MCF 10A (cell line): ENCODE measurements at regions of chr2 and their contacts with region 1.

Region 1: GRCh38 chr2:201071479-201072200 is at the starts of genes HYCC2 and NDUFB3:
- DNase-seq: peak; percentile 93
- H3K4me3 Mint-ChIP-seq: peak within 1 kb of the TSS; percentile 81
- H3K27ac Mint-ChIP-seq: peak within 1 kb of the TSS; percentile 89
- H3K4me1 Mint-ChIP-seq: peaks cover 25% of the 10 kb centered on the region
- H3K27me3 Mint-ChIP-seq: no peaks in the 10 kb centered on the region
- CTCF ChIP-seq: no peak
- total RNA-seq, gene HYCC2: 13.7 and 13.9 TPM in 2 replicates
- total RNA-seq, gene NDUFB3: 78.0 and 94.9 TPM in 2 replicates

Region 2: DNA sequence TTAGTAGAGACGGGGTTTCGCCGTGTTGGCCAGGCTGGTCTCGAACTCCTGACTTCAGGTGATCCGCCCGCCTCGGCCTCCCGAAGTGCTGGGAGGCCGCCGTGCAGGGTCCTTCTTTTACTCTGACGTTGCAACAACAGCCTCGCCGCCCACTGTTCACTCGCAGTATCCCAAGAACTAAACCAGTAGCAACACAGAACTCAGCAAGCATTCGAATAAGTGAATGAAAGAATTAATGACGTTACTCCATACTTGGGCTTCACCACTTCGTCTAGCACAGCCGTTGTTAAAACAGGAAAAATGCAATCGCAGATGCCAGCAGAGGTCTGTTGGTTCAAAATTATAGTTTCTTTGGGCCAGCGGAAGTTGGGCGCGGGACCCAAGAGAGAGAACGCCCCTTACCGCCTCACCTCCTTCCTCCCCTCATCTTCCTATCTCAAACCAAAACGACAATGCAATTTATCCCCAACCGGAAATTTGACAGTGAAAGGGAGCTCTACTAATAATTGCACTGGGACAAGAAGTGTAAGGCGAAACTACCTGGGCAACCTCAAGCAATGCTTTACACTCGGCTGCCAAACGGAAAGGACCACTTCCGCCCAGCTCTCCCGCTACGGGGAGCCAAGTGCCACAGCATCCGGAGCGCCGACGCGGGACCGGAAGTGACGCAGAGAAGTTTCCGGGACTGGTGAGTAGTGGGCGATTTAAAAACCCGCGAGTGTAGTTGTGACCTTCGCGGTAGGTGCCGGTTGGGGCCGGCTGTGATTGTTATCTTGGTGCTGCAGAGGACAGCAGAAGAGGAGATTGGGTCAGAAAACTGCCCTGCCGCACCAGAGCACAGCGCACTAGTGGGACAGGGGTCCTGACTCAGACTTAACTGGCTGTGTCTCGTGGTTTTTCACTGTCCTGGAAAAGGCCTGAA is 182.7 kb before region 1 on chr2 and contains the starts of genes NIF3L1 and PPIL3:
- CTCF ChIA-PET with region 1: interaction called, 7 read pairs
- POLR2A ChIA-PET with region 1: interaction called, 46 read pairs
- intact Hi-C with region 1: no loop called
- DNase-seq: peak; percentile 98
- H3K4me3 Mint-ChIP-seq: peak within 1 kb of the TSS; percentile 98
- H3K27ac Mint-ChIP-seq: peak within 1 kb of the TSS; percentile 98
- H3K4me1 Mint-ChIP-seq: peaks cover 21% of the 10 kb centered on the region
- H3K27me3 Mint-ChIP-seq: no peaks in the 10 kb centered on the region
- CTCF ChIP-seq: no peak
- total RNA-seq, gene NIF3L1: 19.3 and 26.1 TPM in 2 replicates
- total RNA-seq, gene PPIL3: 33.9 and 35.4 TPM in 2 replicates

Region 3: DNA sequence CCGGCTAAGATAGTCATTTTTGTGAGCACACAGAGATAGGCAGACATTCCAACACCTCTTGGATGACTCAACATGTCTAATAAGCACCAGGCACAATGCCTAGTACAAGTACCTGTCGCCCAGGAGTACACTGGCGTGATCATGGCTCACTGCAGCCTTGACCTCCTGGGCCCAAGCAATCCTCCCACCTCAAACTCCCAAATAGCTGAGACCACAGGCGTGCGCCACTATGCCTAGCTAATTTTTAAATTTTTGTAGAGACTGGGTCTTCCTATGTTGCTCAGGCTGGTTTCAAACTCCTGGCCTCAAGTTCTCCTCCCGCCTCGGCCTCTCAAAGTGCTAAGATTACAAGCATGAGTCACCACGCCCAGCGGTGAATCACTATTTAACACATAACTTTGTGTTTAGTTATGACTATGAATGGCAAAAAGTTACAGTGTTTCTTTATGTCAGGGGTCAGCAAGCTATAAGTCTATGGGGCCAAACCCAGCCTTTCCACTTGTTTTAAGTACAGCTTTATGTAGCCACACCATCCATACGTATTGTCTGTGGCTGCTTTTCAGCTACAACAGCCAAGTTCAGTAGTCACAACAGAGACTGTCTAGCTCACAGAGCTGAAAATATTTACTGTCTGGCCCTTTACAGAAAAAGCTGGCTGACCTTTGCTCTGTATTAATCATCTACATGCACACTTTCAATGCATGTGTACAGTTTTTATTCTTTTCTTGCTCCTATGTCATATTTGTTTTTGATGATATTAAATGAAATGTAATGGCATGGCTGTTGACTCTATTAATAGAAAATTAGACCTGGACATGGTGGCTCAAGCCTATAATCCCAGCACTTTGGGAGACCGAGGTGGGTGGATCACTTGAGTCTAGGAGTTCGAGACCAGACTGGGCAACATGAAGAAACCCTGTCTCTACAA is 126.9 kb before region 1 on chr2:
- CTCF ChIA-PET with region 1: interaction called, 17 read pairs
- POLR2A ChIA-PET with region 1: interaction called, 3 read pairs
- intact Hi-C with region 1: no loop called
- DNase-seq: peak; percentile 90
- H3K4me3 Mint-ChIP-seq: no peak overlapping the region
- H3K27ac Mint-ChIP-seq: peak overlapping the region; percentile 87
- H3K4me1 Mint-ChIP-seq: peaks cover 16% of the 10 kb centered on the region
- H3K27me3 Mint-ChIP-seq: no peaks in the 10 kb centered on the region
- CTCF ChIP-seq: no peak

Region 4: DNA sequence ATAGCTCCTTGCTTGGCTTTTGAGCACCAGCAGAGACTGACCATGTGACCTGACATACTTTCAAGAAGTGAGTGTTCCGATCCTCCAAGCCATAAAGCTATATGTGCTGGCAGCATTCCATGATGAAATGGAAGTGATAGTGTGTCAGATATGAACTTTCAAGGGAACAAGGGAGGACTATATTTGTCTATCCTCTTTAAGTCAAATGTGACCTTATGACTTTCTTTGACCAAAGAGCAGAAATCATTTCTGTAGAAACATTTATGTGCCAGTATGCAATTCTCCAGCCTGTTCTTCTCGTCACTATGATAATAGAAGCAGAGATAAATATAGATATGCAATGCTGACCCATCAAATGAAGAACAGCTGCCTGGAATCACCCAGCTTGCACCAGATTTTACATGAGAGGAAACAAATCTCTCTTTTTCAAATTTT is 14.5 kb before region 1 on chr2:
- CTCF ChIA-PET with region 1: interaction called, 26 read pairs
- POLR2A ChIA-PET with region 1: interaction called, 6 read pairs
- intact Hi-C with region 1: no loop called
- DNase-seq: no peak
- H3K4me3 Mint-ChIP-seq: no peak overlapping the region
- H3K27ac Mint-ChIP-seq: no peak overlapping the region
- H3K4me1 Mint-ChIP-seq: peaks cover 5% of the 10 kb centered on the region
- H3K27me3 Mint-ChIP-seq: no peaks in the 10 kb centered on the region
- CTCF ChIP-seq: no peak

Region 5: DNA sequence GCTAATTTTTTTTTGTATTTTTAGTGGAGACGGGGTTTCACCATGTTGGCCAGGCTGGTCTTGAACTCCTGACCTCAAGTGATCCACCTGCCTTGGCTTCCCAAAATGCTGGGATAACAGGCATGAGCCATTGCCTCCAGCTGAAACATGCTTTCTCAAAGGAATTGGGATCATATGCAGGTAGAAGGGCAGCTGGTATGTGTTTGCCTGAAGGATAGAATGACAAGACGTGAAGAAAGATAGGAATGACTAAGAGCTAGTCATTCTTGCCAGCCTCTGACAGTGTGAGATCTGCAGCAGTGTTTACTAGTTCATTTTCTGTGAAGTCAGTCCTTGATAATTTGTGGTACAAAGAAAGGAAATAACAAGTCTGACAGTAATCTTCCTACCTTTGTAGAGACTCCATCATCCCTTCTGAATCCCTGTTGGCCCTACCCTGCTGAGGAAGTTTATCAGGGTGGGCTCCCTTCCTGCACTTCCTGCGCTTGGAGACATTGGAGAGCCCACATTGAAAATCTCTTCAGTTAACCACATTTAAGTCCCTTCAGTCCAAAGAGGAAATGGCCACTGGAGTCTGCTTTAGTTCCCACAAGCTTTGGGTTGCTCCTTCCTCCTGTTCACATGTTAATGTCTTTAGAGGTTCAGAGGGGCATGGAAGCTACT is 59.0 kb after region 1 on chr2:
- CTCF ChIA-PET with region 1: interaction called, 5 read pairs
- POLR2A ChIA-PET with region 1: interaction called, 10 read pairs
- intact Hi-C with region 1: no loop called
- DNase-seq: peak; percentile 78
- H3K4me3 Mint-ChIP-seq: no peak overlapping the region
- H3K27ac Mint-ChIP-seq: peak overlapping the region; percentile 63
- H3K4me1 Mint-ChIP-seq: peaks cover 48% of the 10 kb centered on the region
- H3K27me3 Mint-ChIP-seq: no peaks in the 10 kb centered on the region
- CTCF ChIP-seq: no peak

Region 6: GRCh38 chr2:201182650-201183364 is 111.2 kb after region 1 on chr2 and contains the start of gene CASP10:
- CTCF ChIA-PET with region 1: interaction called, 13 read pairs
- POLR2A ChIA-PET with region 1: interaction called, 12 read pairs
- intact Hi-C with region 1: no loop called
- DNase-seq: peak; percentile 68
- H3K4me3 Mint-ChIP-seq: peak within 1 kb of the TSS; percentile 46
- H3K27ac Mint-ChIP-seq: no peak within 1 kb of the TSS
- H3K4me1 Mint-ChIP-seq: no peaks in the 10 kb centered on the region
- H3K27me3 Mint-ChIP-seq: no peaks in the 10 kb centered on the region
- CTCF ChIP-seq: no peak
- total RNA-seq, gene CASP10: 0.19 and 0.27 TPM in 2 replicates

Region 7: GRCh38 chr2:201242571-201243277 is 171.1 kb after region 1 on chr2:
- CTCF ChIA-PET with region 1: no interaction called
- POLR2A ChIA-PET with region 1: no interaction called
- intact Hi-C with region 1: no loop called
- DNase-seq: no peak
- H3K4me3 Mint-ChIP-seq: no peak overlapping the region
- H3K27ac Mint-ChIP-seq: no peak overlapping the region
- H3K4me1 Mint-ChIP-seq: no peaks in the 10 kb centered on the region
- H3K27me3 Mint-ChIP-seq: no peaks in the 10 kb centered on the region
- CTCF ChIP-seq: no peak